Caco-2 (cell line): ENCODE measurements at regions of chr5 and their contacts with region 1.

Region 1: GRCh38 chr5:174793684-174794328 is 69.4 kb downstream of the MSX2 start:
- DNase-seq: peak; percentile 61 to 81
- H3K4me3 ChIP-seq: no peak overlapping the region
- H3K4me3 Mint-ChIP-seq: peak overlapping the region; percentile 13
- H3K27ac Mint-ChIP-seq: no peak overlapping the region
- H3K4me1 ChIP-seq: no peaks in the 10 kb centered on the region
- H3K4me1 Mint-ChIP-seq: peaks cover 7% of the 10 kb centered on the region
- H3K27me3 ChIP-seq: no peaks in the 10 kb centered on the region
- H3K27me3 Mint-ChIP-seq: no peaks in the 10 kb centered on the region
- CTCF ChIP-seq: peak; percentile 97 to 98

Region 2: DNA sequence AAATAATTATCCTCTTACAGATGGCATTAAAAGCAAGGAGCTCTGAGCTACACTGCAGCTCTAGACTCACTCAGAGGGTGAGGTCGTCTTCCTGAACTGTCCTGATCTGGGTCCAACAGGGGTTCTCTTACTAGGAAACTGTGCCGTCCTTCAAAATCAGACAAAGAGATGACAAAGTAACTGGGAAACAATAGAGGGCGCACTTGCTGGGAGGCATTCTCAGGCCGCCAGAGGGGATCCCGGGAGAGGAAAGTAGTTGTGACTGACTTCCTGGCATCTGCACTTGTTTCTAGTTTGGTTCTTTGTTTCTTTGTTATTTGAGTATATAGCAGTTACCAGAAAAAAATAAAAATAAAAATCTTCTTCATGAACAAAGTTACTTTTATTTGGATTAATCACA is 212.3 kb before region 1 on chr5:
- CTCF ChIA-PET with region 1: no interaction called
- POLR2A ChIA-PET with region 1: no interaction called
- intact Hi-C with region 1: loop called (anchors 5 kb)
- DNase-seq: peak; percentile 61 to 72
- H3K4me3 ChIP-seq: no peak overlapping the region
- H3K4me3 Mint-ChIP-seq: no peak overlapping the region
- H3K27ac Mint-ChIP-seq: no peak overlapping the region
- H3K4me1 ChIP-seq: peaks cover 9% of the 10 kb centered on the region; the same call in 1 of the 2 replicates
- H3K4me1 Mint-ChIP-seq: peaks cover 16% of the 10 kb centered on the region
- H3K27me3 ChIP-seq: no peaks in the 10 kb centered on the region
- H3K27me3 Mint-ChIP-seq: no peaks in the 10 kb centered on the region
- CTCF ChIP-seq: peak; percentile 68 to 70

Region 3: DNA sequence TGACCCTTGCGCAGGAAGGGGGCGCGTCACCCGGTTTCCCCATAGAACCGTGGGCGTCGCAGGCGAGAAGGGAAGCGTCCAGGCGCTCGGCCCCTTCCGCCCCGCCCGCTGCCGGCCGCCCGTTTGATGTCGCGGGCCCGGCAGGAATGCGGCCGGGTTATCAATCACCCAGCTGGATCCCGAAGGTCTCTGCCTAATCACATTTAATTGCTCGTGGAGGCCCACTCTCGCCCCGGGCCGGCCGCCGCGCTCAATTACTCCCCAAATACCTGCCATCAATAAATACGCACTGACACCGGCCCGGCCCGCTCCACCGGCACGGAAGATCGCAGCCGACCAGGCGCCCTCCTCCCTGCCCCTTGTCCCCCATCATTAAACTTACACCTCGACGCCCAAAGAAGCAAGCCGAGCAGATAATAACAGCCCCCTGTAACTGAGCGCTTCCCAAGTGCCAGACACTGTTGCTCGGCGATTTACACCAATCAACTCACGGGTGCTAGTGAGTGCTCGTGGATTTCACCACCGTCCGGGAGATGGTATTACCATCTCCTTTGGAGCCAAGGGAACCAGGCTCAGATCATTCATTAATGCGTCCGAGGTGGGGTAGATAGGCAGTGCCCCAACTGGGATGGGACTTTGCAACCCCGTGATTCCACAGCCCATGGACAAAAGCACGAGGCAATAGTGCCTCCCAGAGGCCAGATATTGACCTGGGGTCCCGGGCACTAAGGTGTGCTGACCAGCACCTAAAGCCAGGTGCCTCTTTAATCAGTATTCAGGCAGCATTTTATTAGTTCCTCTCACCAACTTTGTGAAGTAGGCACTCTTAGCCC is 58.1 kb before region 1 on chr5:
- CTCF ChIA-PET with region 1: interaction called, 4 read pairs
- POLR2A ChIA-PET with region 1: no interaction called
- intact Hi-C with region 1: loop called (anchors 1 kb)
- DNase-seq: peak; percentile 87 to 90
- H3K4me3 ChIP-seq: peak overlapping the region; percentile 50
- H3K4me3 Mint-ChIP-seq: peak overlapping the region; percentile 86
- H3K27ac Mint-ChIP-seq: peak overlapping the region; percentile 52
- H3K4me1 ChIP-seq: peaks cover 36% of the 10 kb centered on the region
- H3K4me1 Mint-ChIP-seq: peaks cover 24% of the 10 kb centered on the region
- H3K27me3 ChIP-seq: no peaks in the 10 kb centered on the region
- H3K27me3 Mint-ChIP-seq: no peaks in the 10 kb centered on the region
- CTCF ChIP-seq: peak; percentile 74 to 90

Region 4: GRCh38 chr5:174751154-174752000 is 42.4 kb before region 1 on chr5:
- CTCF ChIA-PET with region 1: interaction called, 3 read pairs
- POLR2A ChIA-PET with region 1: no interaction called
- intact Hi-C with region 1: loop called (anchors 5 kb)
- DNase-seq: peak in 1 of 2 experiments; percentile 62
- H3K4me3 ChIP-seq: peak overlapping the region; percentile 66
- H3K4me3 Mint-ChIP-seq: peak overlapping the region; percentile 76
- H3K27ac Mint-ChIP-seq: no peak overlapping the region
- H3K4me1 ChIP-seq: no peaks in the 10 kb centered on the region
- H3K4me1 Mint-ChIP-seq: peaks cover 6% of the 10 kb centered on the region
- H3K27me3 ChIP-seq: no peaks in the 10 kb centered on the region
- H3K27me3 Mint-ChIP-seq: no peaks in the 10 kb centered on the region
- CTCF ChIP-seq: no peak